GM12878 (cell line): ENCODE measurements at regions of chr20 and their contacts with region 1.

Region 1: DNA sequence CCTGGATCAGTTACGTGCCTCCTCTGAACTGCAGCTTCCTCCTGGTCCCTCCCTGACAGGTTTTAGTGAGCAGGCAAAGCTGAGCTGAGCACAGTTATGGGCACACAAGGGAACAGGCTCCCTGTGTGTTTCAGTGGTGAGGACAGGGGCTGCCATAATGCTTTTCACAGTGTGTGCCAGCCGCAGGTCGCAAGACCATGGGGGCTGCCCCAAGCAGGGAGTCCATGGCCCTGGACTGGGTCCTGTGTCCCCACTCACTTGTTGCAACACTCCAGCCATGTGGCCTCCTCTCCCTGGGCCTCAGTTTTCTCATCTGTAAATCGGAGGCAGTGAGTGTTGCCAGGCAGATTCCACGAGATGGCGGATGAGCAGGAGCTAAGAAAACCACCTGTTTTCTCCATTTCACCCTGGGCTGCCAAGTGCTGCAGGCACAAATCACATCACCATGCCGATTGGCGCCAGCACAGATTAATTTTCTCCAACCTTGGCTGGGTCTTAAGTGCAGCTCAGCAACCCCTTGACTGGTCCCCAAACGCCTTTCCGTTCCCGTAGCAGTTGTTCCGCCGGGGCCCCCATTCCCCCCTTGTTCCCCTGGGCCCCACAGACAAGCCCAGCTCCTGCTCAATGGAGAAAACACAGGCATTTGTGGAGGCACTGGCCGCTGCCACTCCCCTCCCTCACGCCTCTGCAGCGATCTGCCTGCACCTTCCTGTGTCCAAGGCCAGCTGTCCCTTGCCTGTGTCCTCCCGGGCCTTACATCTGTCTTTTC is 57.1 kb upstream of the NNAT start:
- DNase-seq: no peak
- ATAC-seq: no peak
- H3K4me3 ChIP-seq: no peak overlapping the region
- H3K27ac ChIP-seq: no peak overlapping the region
- H3K4me1 ChIP-seq: no peaks in the 10 kb centered on the region
- H3K27me3 ChIP-seq: peaks cover 0 to 2% of the 10 kb centered on the region in 2 experiments; a peak in 1 of 4 replicates
- CTCF ChIP-seq: no peak
- EP300 ChIP-seq: no peak
- POLR2A ChIP-seq: no peak
- RAD21 ChIP-seq: no peak

Region 2: DNA sequence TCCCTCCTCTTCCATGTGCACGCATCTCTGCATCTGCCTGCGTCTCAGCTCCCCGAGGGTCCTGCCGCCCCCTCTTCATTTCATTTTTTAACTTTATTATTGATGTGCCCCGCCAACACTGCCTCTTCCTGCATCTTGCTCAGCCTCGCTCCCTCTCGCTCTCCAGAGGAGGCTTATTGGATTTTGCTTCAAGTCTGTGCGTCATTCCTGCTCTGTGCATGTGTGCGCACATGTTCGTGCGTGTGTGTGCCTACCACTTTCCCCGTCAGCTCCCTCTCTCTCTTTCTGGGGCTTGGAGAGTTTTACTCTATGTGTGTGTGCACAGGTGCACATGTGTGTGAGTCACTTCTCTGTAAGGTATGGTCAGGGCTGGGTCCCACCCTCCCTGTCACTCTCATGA is 14.6 kb before region 1 on chr20:
- CTCF ChIA-PET with region 1: no interaction called
- POLR2A ChIA-PET with region 1: no interaction called
- RAD21 ChIA-PET with region 1: no interaction called
- SMC1A ChIA-PET with region 1: no interaction called
- in situ Hi-C with region 1: no loop called
- intact Hi-C with region 1: no loop called
- DNase-seq: no peak
- ATAC-seq: no peak
- H3K4me3 ChIP-seq: no peak overlapping the region
- H3K27ac ChIP-seq: no peak overlapping the region
- H3K4me1 ChIP-seq: no peaks in the 10 kb centered on the region
- H3K27me3 ChIP-seq: peaks cover 0 to 1% of the 10 kb centered on the region in 2 experiments; a peak in 2 of 4 replicates
- CTCF ChIP-seq: no peak
- EP300 ChIP-seq: no peak
- POLR2A ChIP-seq: no peak
- RAD21 ChIP-seq: no peak

Region 3: GRCh38 chr20:37475252-37475651 is 11.3 kb after region 1 on chr20:
- CTCF ChIA-PET with region 1: no interaction called
- POLR2A ChIA-PET with region 1: no interaction called
- RAD21 ChIA-PET with region 1: no interaction called
- SMC1A ChIA-PET with region 1: no interaction called
- in situ Hi-C with region 1: no loop called
- intact Hi-C with region 1: no loop called
- DNase-seq: no peak
- ATAC-seq: no peak
- H3K4me3 ChIP-seq: no peak overlapping the region
- H3K27ac ChIP-seq: no peak overlapping the region
- H3K4me1 ChIP-seq: no peaks in the 10 kb centered on the region
- H3K27me3 ChIP-seq: no peaks in the 10 kb centered on the region; a peak in 2 of 4 replicates
- CTCF ChIP-seq: no peak
- EP300 ChIP-seq: no peak
- POLR2A ChIP-seq: no peak
- RAD21 ChIP-seq: no peak

Region 4: GRCh38 chr20:37543828-37544227 is 79.9 kb after region 1 on chr20:
- CTCF ChIA-PET with region 1: no interaction called
- POLR2A ChIA-PET with region 1: no interaction called
- RAD21 ChIA-PET with region 1: no interaction called
- SMC1A ChIA-PET with region 1: no interaction called
- in situ Hi-C with region 1: no loop called
- intact Hi-C with region 1: no loop called
- DNase-seq: no peak
- ATAC-seq: no peak
- H3K4me3 ChIP-seq: no peak overlapping the region
- H3K27ac ChIP-seq: no peak overlapping the region
- H3K4me1 ChIP-seq: no peaks in the 10 kb centered on the region
- H3K27me3 ChIP-seq: no peaks in the 10 kb centered on the region
- CTCF ChIP-seq: peak in 1 of 3 experiments; percentile 19; a peak in 1 of 6 replicates
- EP300 ChIP-seq: no peak
- POLR2A ChIP-seq: no peak
- RAD21 ChIP-seq: no peak

Region 5: GRCh38 chr20:37999526-38000263 is 535.8 kb after region 1 on chr20:
- CTCF ChIA-PET with region 1: no interaction called
- POLR2A ChIA-PET with region 1: interaction called, 10 read pairs
- RAD21 ChIA-PET with region 1: no interaction called
- SMC1A ChIA-PET with region 1: no interaction called
- in situ Hi-C with region 1: no loop called
- intact Hi-C with region 1: no loop called
- DNase-seq: no peak
- ATAC-seq: no peak
- H3K4me3 ChIP-seq: no peak overlapping the region
- H3K27ac ChIP-seq: no peak overlapping the region
- H3K4me1 ChIP-seq: no peaks in the 10 kb centered on the region
- H3K27me3 ChIP-seq: no peaks in the 10 kb centered on the region
- CTCF ChIP-seq: no peak
- EP300 ChIP-seq: no peak
- POLR2A ChIP-seq: no peak
- RAD21 ChIP-seq: no peak